ENCODE measurements at regions of chr9 and their contacts with region 1.

Region 1: GRCh38 chr9:20032413-20033006 is 243.7 kb upstream of the SLC24A2 start:
- DNase-seq: no peak
- ATAC-seq: no peak

Region 2: GRCh38 chr9:20289423-20290010 is 257.0 kb after region 1 on chr9:
- intact Hi-C with region 1: loop called (anchors 5 kb)
- DNase-seq: no peak
- ATAC-seq: no peak

Measured in Right ventricle myocardium inferior (tissue), 1 donor.